ENCODE measurements at regions of chr13 and their contacts with region 1.

Region 1: GRCh38 chr13:106942558-106942957 is 374.6 kb upstream of the ARGLU1 start:
- DNase-seq: no peak
- H3K4me3 ChIP-seq: no peak overlapping the region
- CTCF ChIP-seq: no peak

Region 2: GRCh38 chr13:106143930-106144709 is 798.4 kb before region 1 on chr13:
- in situ Hi-C with region 1: no loop called
- DNase-seq: no peak
- H3K4me3 ChIP-seq: no peak overlapping the region
- CTCF ChIP-seq: no peak

Region 3: DNA sequence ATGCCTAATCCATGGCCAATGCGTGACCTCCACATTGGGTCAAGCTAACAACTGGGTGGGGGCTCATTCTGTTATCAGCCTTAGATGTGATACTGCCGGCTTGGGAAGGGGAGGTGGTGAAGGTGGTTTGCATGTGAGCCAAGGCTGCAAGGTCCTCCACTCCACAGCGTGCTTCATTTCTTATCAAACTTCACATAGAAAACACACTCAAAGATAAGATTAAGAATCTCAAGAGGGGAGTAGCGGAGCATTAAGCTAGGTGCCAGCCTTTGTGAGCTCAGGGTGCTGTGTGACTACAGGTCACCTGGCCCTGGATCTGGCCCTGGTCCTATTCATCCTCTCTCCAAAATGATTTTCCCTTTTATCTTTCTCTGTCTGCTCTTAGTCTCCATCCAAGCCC is 361.3 kb before region 1 on chr13:
- in situ Hi-C with region 1: loop called (anchors 5 kb)
- DNase-seq: no peak
- H3K4me3 ChIP-seq: no peak overlapping the region
- CTCF ChIP-seq: no peak

Region 4: DNA sequence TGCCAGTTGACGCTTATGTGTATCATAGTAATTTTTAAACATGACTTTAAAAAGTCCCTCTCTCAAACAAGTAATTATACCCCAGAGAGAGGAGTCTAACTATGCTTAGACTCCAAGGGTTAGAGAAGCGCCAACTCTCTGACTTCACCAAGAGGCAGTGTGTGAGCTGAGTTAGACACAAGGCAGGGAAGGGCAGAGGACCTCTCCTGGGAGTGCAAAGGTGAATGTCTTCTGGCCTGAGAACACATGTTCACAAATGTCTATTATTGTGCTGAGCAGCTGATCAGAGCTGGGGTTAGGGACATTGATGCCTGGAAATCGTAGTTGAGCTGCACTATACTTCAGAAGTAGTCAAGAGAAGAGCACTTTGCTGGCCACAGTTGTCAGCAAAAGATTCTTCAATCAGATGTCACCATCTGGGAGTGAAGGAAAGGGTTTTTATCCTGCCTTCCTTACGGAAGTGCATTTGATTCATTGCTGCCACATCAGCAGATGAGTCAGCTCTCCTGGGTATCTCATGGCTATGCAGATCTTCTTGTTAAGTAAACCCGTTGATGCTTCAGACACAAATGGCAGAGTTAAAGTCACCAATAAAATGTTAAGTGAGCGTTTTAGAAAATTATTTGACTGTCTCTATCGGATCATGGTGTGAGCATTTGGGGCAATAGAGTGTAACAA is 91.4 kb before region 1 on chr13:
- in situ Hi-C with region 1: loop called (anchors 5 kb)
- DNase-seq: no peak
- H3K4me3 ChIP-seq: no peak overlapping the region
- CTCF ChIP-seq: no peak

Region 5: GRCh38 chr13:107006661-107007060 is 64.1 kb after region 1 on chr13:
- in situ Hi-C with region 1: no loop called
- DNase-seq: no peak
- H3K4me3 ChIP-seq: no peak overlapping the region
- CTCF ChIP-seq: no peak

Measured in astrocyte of the cerebellum (primary cell).